Common myeloid progenitor, CD34-positive (primary cell): ENCODE measurements at regions of chr1 and their contacts with region 1.

Region 1: GRCh38 chr1:66996018-66996682 is 57.8 kb downstream of the SLC35D1 start:
- DNase-seq: peak; percentile 87 to 94 (median 93)
- H3K4me3 ChIP-seq: peak overlapping the region in 2 of 7 experiments; percentile 16 to 67
- H3K27ac ChIP-seq: no peak overlapping the region
- H3K4me1 ChIP-seq: peaks cover 7 to 22% (median 12%) of the 10 kb centered on the region in 4 experiments
- H3K27me3 ChIP-seq: no peaks in the 10 kb centered on the region

Region 2: DNA sequence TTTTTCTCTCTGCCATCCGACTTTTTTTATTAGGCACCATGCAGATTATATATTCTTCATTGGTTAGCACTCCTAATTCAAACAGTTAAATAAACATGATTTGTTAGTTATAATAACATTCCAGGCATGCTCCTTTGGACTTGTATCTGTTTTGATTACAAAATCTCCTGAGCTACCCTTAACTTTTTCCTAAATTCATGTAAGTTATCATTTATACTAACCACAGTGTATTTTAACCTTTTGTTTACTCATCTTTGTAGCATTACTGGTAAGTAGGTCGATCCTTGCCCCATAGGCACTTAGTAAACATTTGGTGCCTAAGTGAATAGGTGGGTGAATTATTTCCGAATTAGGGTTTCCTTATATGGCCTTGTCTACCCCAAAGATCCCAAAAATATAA is 27.6 kb before region 1 on chr1:
- CTCF ChIA-PET with region 1: no interaction called
- POLR2A ChIA-PET with region 1: no interaction called
- DNase-seq: no peak
- H3K4me3 ChIP-seq: no peak overlapping the region
- H3K27ac ChIP-seq: no peak overlapping the region
- H3K4me1 ChIP-seq: no peaks in the 10 kb centered on the region
- H3K27me3 ChIP-seq: no peaks in the 10 kb centered on the region

Region 3: GRCh38 chr1:66981679-66982078 is 14.5 kb before region 1 on chr1:
- CTCF ChIA-PET with region 1: interaction called, 10 read pairs
- POLR2A ChIA-PET with region 1: no interaction called
- DNase-seq: peak; percentile 63 to 87 (median 85)
- H3K4me3 ChIP-seq: peak overlapping the region in 4 of 7 experiments; percentile 47 to 75 (median 68)
- H3K27ac ChIP-seq: peak overlapping the region; percentile 68 to 88
- H3K4me1 ChIP-seq: peaks cover 0 to 11% (median 2%) of the 10 kb centered on the region in 4 experiments
- H3K27me3 ChIP-seq: no peaks in the 10 kb centered on the region

Region 4: DNA sequence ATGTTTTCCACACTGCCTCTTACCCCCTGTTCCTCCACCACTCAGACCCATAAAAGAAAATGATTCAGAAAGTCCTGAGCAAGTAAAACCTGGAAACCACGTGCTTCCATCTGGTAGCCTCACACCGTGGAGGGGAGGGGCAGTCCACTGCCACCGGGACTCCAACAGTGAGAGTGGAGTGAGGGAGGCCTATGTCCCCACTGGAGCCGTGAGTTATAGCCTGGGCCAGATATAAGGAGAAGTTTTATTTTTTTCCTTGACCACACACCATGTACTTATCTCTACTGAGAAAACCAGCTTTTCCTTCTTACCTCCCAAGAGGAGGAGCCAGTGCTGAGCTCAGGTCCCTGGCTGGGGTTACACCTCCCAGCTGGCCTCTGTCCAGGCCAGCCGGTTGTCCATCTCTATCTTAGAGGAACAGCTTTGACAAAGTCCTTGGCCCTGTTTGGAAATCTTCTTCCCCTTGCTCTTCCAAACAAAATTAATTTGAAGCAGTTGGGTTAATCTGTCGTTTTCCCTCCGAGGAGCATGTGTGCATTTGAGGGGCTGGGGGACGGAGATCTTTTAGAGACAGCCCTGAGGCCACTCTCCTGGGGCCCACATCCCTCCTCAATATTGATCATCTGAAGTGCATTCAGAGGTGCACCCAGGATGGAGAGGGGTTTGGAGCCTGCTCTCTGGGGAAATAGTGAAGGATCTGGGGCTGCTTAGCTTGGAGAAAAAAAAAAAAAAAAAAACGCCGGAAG is 483.2 kb after region 1 on chr1:
- CTCF ChIA-PET with region 1: no interaction called
- POLR2A ChIA-PET with region 1: no interaction called
- DNase-seq: peak; percentile 37 to 79 (median 65)
- H3K4me3 ChIP-seq: peak overlapping the region in 2 of 7 experiments; percentile 20 to 25
- H3K27ac ChIP-seq: no peak overlapping the region
- H3K4me1 ChIP-seq: peaks cover 0 to 15% (median 9%) of the 10 kb centered on the region in 4 experiments
- H3K27me3 ChIP-seq: no peaks in the 10 kb centered on the region